Stomach (tissue), 19 donors: ENCODE measurements at regions of chr4 and their contacts with region 1.

Region 1: GRCh38 chr4:108029731-108030130 is 40.0 kb downstream of the HADH start:
- DNase-seq: no peak
- H3K4me3 ChIP-seq: no peak overlapping the region
- H3K27ac ChIP-seq: no peak overlapping the region
- H3K4me1 ChIP-seq: no peaks in the 10 kb centered on the region
- H3K27me3 ChIP-seq: no peaks in the 10 kb centered on the region
- CTCF ChIP-seq: no peak
- EP300 ChIP-seq: no peak
- POLR2A ChIP-seq: no peak

Region 2: GRCh38 chr4:108560616-108561015 is 530.9 kb after region 1 on chr4:
- intact Hi-C with region 1: loop called (anchors 10 kb)
- DNase-seq: peak in 1 of 2 donors; percentile 62
- H3K4me3 ChIP-seq: no peak overlapping the region
- H3K27ac ChIP-seq: no peak overlapping the region
- H3K4me1 ChIP-seq: no peaks in the 10 kb centered on the region
- H3K27me3 ChIP-seq: no peaks in the 10 kb centered on the region
- CTCF ChIP-seq: no peak
- EP300 ChIP-seq: no peak
- POLR2A ChIP-seq: no peak